Activated B cell treated with CpG ODN at 0.5 μM for 24 hours (primary cell): ENCODE measurements at regions of chr4 and their contacts with region 1.

Region 1: GRCh38 chr4:167021545-167022155 is 212.6 kb downstream of the SPOCK3 start:
- DNase-seq: peak; percentile 33
- ATAC-seq: no peak
- H3K4me3 Mint-ChIP-seq: no peak overlapping the region
- H3K27ac Mint-ChIP-seq: no peak overlapping the region
- H3K4me1 Mint-ChIP-seq: no peaks in the 10 kb centered on the region
- H3K27me3 Mint-ChIP-seq: no peaks in the 10 kb centered on the region
- CTCF ChIP-seq: peak; percentile 94

Region 2: DNA sequence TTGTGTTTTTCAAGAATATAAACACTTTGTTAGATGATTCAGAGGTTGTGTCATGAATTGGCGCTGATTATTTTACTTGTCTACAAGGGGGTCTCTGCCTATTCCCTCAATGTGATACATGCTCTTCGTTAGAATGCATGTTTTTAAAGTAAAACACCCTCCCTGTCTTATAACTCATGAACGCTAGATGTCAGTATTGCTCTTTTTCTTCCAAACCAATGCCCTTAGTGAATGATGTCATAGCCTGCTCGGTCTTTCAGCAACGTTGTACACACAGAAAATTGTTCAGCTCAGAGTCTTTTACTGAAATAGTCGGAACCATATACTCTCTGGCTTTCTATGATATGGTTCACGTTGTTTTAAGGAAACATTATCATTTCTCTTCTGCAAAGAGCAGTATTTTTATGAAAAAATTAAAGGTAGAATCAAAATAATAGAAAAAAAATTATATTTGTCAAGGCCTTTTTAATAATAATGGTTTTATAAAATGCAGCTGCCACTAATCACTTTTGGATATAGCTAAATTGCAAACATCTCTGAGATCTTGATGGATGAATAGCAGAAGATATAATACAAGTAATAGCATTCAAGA is 855.7 kb before region 1 on chr4:
- CTCF ChIA-PET with region 1: no interaction called
- POLR2A ChIA-PET with region 1: no interaction called
- intact Hi-C with region 1: loop called (anchors 5 kb)
- DNase-seq: no peak
- ATAC-seq: peak; percentile 60
- H3K4me3 Mint-ChIP-seq: no peak overlapping the region
- H3K27ac Mint-ChIP-seq: no peak overlapping the region
- H3K4me1 Mint-ChIP-seq: no peaks in the 10 kb centered on the region
- H3K27me3 Mint-ChIP-seq: no peaks in the 10 kb centered on the region
- CTCF ChIP-seq: no peak

Region 3: GRCh38 chr4:167290678-167291077 is 269.0 kb after region 1 on chr4:
- CTCF ChIA-PET with region 1: no interaction called
- POLR2A ChIA-PET with region 1: no interaction called
- intact Hi-C with region 1: loop called (anchors 5 kb)
- DNase-seq: no peak
- ATAC-seq: no peak
- H3K4me3 Mint-ChIP-seq: no peak overlapping the region
- H3K27ac Mint-ChIP-seq: no peak overlapping the region
- H3K4me1 Mint-ChIP-seq: no peaks in the 10 kb centered on the region
- H3K27me3 Mint-ChIP-seq: no peaks in the 10 kb centered on the region
- CTCF ChIP-seq: no peak

Region 4: GRCh38 chr4:167622481-167623246 is 601.0 kb after region 1 on chr4:
- CTCF ChIA-PET with region 1: no interaction called
- POLR2A ChIA-PET with region 1: no interaction called
- intact Hi-C with region 1: loop called (anchors 1 kb)
- DNase-seq: no peak
- ATAC-seq: peak; percentile 28
- H3K4me3 Mint-ChIP-seq: no peak overlapping the region
- H3K27ac Mint-ChIP-seq: no peak overlapping the region
- H3K4me1 Mint-ChIP-seq: no peaks in the 10 kb centered on the region
- H3K27me3 Mint-ChIP-seq: no peaks in the 10 kb centered on the region
- CTCF ChIP-seq: no peak

Region 5: DNA sequence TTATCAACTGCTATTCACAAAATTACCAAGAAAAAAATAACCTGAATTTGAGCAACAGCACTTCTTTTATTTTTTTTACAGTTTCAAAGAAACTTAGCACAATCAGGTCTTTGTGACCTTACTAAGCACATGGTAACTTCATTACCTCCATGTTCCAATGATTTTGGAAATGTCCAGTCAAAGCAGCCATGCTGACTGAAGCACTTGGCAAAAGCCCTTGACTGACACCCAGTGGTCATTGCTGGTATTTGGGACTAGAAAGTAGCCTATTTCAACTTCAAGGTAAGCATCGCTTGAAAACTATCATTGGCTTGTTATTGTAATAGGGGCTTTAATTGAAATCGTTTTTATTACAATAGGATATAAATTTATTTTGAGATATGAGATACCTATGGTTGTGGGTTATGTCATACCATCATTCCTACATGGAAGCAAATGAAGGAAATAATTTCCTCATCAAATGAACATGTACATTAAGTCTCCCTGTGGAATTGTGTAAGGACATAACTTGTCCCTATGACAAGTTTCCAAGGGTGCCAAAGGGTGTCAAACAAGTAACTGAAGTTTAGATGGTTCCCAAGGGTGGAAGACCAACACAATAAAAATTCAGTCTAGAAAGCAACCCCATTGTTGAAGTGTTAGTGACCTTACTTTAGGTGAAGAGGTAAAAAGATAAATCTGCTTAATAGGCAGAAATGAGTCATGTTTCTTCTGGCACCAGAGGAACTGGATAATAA is 1055.5 kb after region 1 on chr4:
- CTCF ChIA-PET with region 1: no interaction called
- POLR2A ChIA-PET with region 1: no interaction called
- intact Hi-C with region 1: loop called (anchors 1 kb)
- DNase-seq: no peak
- ATAC-seq: peak; percentile 49
- H3K4me3 Mint-ChIP-seq: no peak overlapping the region
- H3K27ac Mint-ChIP-seq: no peak overlapping the region
- H3K4me1 Mint-ChIP-seq: no peaks in the 10 kb centered on the region
- H3K27me3 Mint-ChIP-seq: no peaks in the 10 kb centered on the region
- CTCF ChIP-seq: peak; percentile 46

Region 6: DNA sequence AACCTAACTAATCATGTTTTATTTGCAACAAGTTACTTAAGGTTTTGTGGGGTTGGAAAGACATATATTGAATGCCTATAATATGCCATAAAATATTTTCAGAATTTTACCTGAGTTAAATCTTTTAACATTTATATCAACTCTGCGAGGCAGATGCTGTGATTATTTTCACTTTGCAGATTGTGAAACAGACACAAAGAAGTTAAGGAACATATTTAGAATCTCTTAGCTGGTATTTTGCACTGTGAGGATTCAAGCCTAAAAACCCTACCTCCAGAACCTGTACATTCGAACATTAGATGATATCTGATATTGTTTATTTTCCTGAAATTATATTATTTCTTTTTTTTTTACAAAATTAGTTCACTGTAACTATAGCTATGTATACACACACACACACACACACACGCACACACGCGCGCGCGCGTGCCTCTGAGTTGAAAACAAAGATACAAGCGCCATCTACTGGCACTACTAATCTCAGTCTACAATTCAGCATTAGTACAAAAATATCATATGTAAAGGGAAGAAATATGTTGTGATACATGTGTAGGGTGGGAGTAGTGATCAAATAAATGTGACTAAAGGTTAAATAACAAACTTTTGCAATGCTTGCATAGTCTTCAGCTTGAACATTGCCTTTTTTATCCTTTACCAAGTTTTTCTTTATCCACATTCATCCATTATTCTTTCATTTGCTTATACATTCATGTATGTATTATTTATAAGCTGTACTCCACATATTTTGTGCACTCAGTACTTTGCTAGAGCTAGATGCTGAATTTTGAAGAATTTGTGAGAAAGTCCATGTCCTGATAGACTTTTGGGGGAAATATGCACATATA is 1132.2 kb after region 1 on chr4:
- CTCF ChIA-PET with region 1: no interaction called
- POLR2A ChIA-PET with region 1: no interaction called
- intact Hi-C with region 1: loop called (anchors 1 kb)
- DNase-seq: peak; percentile 25
- ATAC-seq: peak; percentile 47
- H3K4me3 Mint-ChIP-seq: peak overlapping the region; percentile 56
- H3K27ac Mint-ChIP-seq: no peak overlapping the region
- H3K4me1 Mint-ChIP-seq: peaks cover 2% of the 10 kb centered on the region
- H3K27me3 Mint-ChIP-seq: no peaks in the 10 kb centered on the region
- CTCF ChIP-seq: peak; percentile 72